ENCODE measurements at regions of chr11 and their contacts with region 1.

Region 1: DNA sequence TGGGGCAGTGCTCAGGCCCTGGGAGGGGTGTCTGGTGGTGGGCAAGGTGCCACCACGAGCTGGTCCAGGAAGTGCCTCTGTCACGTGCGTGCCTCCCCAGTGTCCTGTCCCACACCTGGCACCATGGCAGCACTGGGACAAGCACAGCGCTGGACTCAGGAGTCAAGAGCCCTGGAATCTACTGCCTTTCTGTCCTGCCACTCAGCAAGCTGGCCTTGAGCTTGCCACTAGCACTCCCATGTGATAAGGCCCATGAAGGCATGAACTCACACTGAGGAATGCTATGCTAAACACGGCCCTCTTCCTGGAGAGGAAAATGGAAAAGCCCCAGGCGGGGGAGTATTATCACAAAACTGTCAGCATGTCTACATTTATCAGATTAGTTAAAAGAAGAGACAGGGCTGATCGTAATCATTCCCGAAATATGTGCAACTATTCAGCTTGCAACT is 50.7 kb upstream of the SLC35C1 start:
- DNase-seq: peak; percentile 68 to 79
- ATAC-seq: peak; percentile 54
- H3K4me3 ChIP-seq: no peak overlapping the region
- H3K27ac ChIP-seq: peak overlapping the region; percentile 32 to 56
- H3K4me1 ChIP-seq: peaks cover 0 to 2% of the 10 kb centered on the region in 2 donors
- H3K27me3 ChIP-seq: no peaks in the 10 kb centered on the region

Region 2: DNA sequence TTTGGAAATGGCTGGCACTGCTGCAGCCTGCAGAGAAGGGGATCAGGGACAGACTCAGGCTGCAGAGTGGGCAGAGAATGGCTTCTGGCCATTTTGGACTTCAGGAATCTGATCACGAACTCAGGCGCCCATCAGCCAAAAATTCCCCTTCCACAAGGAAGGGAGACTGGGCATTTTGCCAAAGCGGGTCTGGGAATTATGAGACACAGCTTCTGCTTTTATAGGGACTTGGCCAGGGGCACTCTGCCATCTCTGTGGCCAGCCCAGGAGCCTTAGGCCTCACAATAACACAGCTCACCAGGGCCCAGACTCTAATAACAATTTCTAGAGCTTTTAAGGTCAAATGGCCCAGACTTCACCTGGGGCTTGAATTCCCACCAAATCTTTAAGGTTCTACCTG is 163.5 kb before region 1 on chr11:
- intact Hi-C with region 1: loop called in 1 of 2 experiments (anchors 5 kb)
- DNase-seq: peak; percentile 86 to 93
- ATAC-seq: peak; percentile 69
- H3K4me3 ChIP-seq: no peak overlapping the region
- H3K27ac ChIP-seq: no peak overlapping the region
- H3K4me1 ChIP-seq: peaks cover 0 to 4% of the 10 kb centered on the region in 2 donors
- H3K27me3 ChIP-seq: no peaks in the 10 kb centered on the region

Region 3: GRCh38 chr11:45665206-45665932 is 88.9 kb before region 1 on chr11 and contains the start of gene CHST1:
- intact Hi-C with region 1: loop called in 1 of 2 experiments (anchors 10 kb)
- DNase-seq: peak; percentile 74 to 91
- ATAC-seq: peak; percentile 77
- H3K4me3 ChIP-seq: peak within 1 kb of the TSS; percentile 88
- H3K27ac ChIP-seq: peak within 1 kb of the TSS in 1 of 2 donors; percentile 52
- H3K4me1 ChIP-seq: no peaks in the 10 kb centered on the region
- H3K27me3 ChIP-seq: no peaks in the 10 kb centered on the region
- total RNA-seq, gene CHST1: 11.0 to 15.2 TPM

Region 4: DNA sequence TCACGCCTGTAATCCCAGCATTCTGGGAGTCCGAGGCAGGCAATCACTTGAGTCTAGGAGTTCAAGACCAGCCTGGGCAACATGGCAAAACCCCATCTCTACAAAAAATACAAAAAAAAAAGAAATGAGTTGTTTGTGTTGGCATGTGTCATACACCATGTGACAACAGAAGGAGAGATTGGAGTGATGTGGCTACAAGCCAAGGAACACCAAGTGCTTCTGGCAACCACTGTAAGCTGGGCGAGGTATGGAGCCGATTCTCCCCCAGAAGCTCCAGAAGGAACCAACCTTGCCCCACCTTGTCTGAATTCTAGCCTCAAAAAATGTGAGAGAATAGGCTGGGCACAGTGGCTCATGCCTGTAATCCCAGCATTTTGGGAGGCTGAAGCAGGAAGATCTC is 11.6 kb after region 1 on chr11:
- intact Hi-C with region 1: no loop called
- DNase-seq: no peak
- ATAC-seq: no peak
- H3K4me3 ChIP-seq: no peak overlapping the region
- H3K27ac ChIP-seq: no peak overlapping the region
- H3K4me1 ChIP-seq: no peaks in the 10 kb centered on the region
- H3K27me3 ChIP-seq: no peaks in the 10 kb centered on the region

Region 5: GRCh38 chr11:45778341-45778740 is 24.1 kb after region 1 on chr11:
- intact Hi-C with region 1: no loop called
- DNase-seq: no peak
- ATAC-seq: no peak
- H3K4me3 ChIP-seq: no peak overlapping the region
- H3K27ac ChIP-seq: no peak overlapping the region
- H3K4me1 ChIP-seq: no peaks in the 10 kb centered on the region
- H3K27me3 ChIP-seq: no peaks in the 10 kb centered on the region